Left ventricle myocardium superior (tissue), 1 donor: ENCODE measurements at regions of chr14 and their contacts with region 1.

Region 1: DNA sequence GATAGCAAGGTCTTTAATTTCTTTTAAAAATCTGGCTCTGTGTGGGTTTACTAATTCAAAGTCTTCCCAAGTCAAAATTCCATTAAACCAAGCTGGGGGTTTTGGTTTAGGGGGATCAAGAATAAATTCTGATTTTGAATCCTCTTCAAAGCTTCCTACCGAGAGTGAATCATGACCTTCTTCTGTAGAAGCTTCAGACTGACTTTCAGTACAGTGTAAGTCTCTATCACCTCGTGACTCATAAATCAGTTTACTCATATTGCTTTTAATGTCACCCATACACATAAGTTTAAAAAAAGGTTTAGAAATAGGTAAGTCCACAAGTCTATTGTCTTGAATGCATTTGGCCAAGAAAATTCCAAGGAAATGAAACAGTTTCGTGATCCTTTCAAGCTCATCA is 80.6 kb upstream of the STRN3 start:
- DNase-seq: no peak
- ATAC-seq: no peak

Region 2: DNA sequence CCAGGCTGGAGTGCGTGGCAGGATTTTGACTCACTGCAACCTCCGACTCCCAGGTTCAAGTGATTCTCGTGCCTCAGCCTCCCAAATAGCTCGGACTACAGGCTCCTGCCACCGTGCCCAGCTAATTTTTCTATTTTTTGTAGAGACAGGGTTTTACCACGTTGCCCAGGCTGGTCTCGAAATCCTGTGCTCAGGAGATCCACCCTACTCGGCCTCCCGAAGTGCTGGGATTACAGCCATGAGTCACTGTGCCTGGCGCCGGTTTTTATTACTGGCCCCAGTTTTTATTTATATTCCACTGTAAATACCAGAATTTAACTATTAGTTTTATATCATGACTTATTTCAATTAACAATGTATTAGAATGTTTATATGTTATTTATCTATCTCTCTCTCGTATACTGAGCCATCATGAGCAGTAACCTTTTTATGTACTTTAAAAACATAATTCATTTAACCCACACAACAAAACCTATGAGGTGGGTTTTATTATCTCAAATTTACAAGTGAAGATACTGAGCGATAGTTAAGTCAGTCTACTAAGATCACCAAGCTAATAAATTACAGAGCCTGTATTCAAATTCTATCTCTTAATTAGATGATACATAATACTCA is 53.0 kb after region 1 on chr14:
- intact Hi-C with region 1: loop called (anchors 10 kb)
- DNase-seq: no peak
- ATAC-seq: no peak